Lower leg skin (tissue), 4 donors: ENCODE measurements at regions of chr9 and their contacts with region 1.

Region 1: GRCh38 chr9:111661150-111661801 is at the start of gene GNG10:
- DNase-seq: peak in 1 of 2 donors; percentile 89
- H3K4me3 ChIP-seq: peak within 1 kb of the TSS; percentile 62
- CTCF ChIP-seq: no peak
- POLR2A ChIP-seq: no peak
- total RNA-seq, gene GNG10: 5.3 to 21.1 (median 15.4) TPM

Region 2: DNA sequence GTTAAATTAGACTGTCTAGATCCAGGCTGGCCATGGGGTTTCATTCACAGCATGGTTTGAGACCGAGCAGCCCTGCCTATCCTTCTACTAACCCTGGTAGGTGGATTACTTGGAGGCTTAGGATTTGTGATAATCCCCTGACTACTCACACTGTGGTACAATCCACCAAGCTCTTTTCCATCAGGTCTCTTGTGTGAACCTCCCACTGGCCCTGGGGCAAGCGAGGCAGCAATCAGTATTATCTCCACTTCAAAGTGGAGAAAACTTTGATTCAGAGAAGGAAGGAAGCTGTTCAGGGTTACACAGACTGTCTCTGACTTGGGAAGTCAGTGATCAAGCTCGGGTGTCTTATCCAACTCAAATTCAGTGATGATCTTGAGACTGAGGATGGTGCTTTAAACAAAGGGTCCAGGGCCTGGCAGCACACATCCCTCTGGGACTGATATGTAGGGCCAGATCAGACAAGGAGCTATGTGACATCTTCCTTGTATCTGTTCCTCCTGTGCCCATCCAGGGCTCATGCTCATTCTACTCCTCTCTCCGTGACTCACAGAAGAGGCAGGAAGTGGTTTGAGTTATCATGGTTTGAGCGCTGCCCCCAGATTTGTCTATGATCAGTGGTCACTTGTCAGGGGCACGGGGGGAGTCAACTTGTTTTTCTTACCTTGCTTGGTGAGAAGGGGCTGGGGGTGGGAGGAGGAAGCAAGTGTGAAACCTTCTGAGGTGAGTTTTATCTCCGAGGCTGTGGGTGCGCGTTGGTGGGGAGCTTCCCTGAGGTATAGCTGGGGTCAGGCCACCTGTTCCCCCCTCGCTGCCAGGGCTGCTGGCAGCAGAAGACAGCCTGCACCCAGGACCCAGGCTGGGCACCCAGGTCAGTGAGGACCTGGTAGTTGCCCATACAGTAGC is 1850.8 kb after region 1 on chr9:
- intact Hi-C with region 1: loop called (anchors 5 kb)
- DNase-seq: no peak
- H3K4me3 ChIP-seq: no peak overlapping the region
- CTCF ChIP-seq: no peak
- POLR2A ChIP-seq: no peak